A673 (cell line): ENCODE measurements at regions of chr14 and their contacts with region 1.

Region 1: GRCh38 chr14:104318558-104319421 is 180.4 kb downstream of the KIF26A start:
- DNase-seq: no peak
- H3K4me3 ChIP-seq: no peak overlapping the region
- H3K27ac ChIP-seq: no peak overlapping the region
- H3K4me1 ChIP-seq: no peaks in the 10 kb centered on the region
- H3K27me3 ChIP-seq: peaks cover 2% of the 10 kb centered on the region
- CTCF ChIP-seq: no peak

Region 2: GRCh38 chr14:103472939-103473338 is 845.9 kb before region 1 on chr14:
- CTCF ChIA-PET with region 1: no interaction called
- POLR2A ChIA-PET with region 1: no interaction called
- intact Hi-C with region 1: loop called (anchors 10 kb)
- DNase-seq: no peak
- H3K4me3 ChIP-seq: no peak overlapping the region
- H3K27ac ChIP-seq: no peak overlapping the region
- H3K4me1 ChIP-seq: no peaks in the 10 kb centered on the region
- H3K27me3 ChIP-seq: no peaks in the 10 kb centered on the region
- CTCF ChIP-seq: no peak

Region 3: GRCh38 chr14:104913435-104913834 is 594.6 kb after region 1 on chr14:
- CTCF ChIA-PET with region 1: no interaction called
- POLR2A ChIA-PET with region 1: no interaction called
- intact Hi-C with region 1: no loop called
- DNase-seq: no peak
- H3K4me3 ChIP-seq: no peak overlapping the region
- H3K27ac ChIP-seq: no peak overlapping the region
- H3K4me1 ChIP-seq: no peaks in the 10 kb centered on the region
- H3K27me3 ChIP-seq: peaks cover 28% of the 10 kb centered on the region
- CTCF ChIP-seq: no peak